Activated B cell treated with CpG ODN at 0.5 μM for 24 hours (primary cell): ENCODE measurements at regions of chr5 and their contacts with region 1.

Region 1: GRCh38 chr5:59188419-59189225 is 605.7 kb downstream of the RAB3C start:
- DNase-seq: peak; percentile 21
- ATAC-seq: peak; percentile 54
- H3K4me3 Mint-ChIP-seq: peak overlapping the region; percentile 48
- H3K27ac Mint-ChIP-seq: no peak overlapping the region
- H3K4me1 Mint-ChIP-seq: peaks cover 6% of the 10 kb centered on the region
- H3K27me3 Mint-ChIP-seq: peaks cover 3% of the 10 kb centered on the region
- CTCF ChIP-seq: peak; percentile 94

Region 2: GRCh38 chr5:58944221-58944620 is 244.4 kb before region 1 on chr5:
- CTCF ChIA-PET with region 1: no interaction called
- POLR2A ChIA-PET with region 1: no interaction called
- intact Hi-C with region 1: no loop called
- DNase-seq: no peak
- ATAC-seq: no peak
- H3K4me3 Mint-ChIP-seq: no peak overlapping the region
- H3K27ac Mint-ChIP-seq: no peak overlapping the region
- H3K4me1 Mint-ChIP-seq: no peaks in the 10 kb centered on the region
- H3K27me3 Mint-ChIP-seq: peaks cover 5% of the 10 kb centered on the region
- CTCF ChIP-seq: no peak

Region 3: DNA sequence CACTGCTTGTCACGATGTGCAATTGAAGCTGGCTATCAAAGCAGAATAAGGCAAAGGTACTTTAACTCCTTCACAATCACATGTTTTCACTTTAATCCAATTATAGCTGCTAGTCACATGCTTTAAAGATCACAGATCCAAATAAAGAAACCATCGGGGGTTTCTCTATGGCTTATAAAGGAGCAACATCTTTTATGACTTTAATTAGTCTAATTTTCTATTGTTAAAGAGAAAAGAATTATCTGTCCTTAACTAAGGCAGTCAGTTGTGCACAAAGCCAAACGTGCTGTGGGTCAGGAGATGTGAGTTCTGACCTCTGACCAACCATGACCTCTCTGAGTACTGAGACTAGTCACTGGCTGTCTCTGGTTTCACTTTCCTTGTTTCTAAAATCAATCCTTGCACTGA is 44.7 kb before region 1 on chr5:
- CTCF ChIA-PET with region 1: no interaction called
- POLR2A ChIA-PET with region 1: no interaction called
- intact Hi-C with region 1: no loop called
- DNase-seq: no peak
- ATAC-seq: no peak
- H3K4me3 Mint-ChIP-seq: no peak overlapping the region
- H3K27ac Mint-ChIP-seq: no peak overlapping the region
- H3K4me1 Mint-ChIP-seq: peaks cover 7% of the 10 kb centered on the region
- H3K27me3 Mint-ChIP-seq: no peaks in the 10 kb centered on the region
- CTCF ChIP-seq: no peak

Region 4: GRCh38 chr5:59367791-59368394 is 179.3 kb after region 1 on chr5:
- CTCF ChIA-PET with region 1: interaction called, 31 read pairs
- POLR2A ChIA-PET with region 1: no interaction called
- intact Hi-C with region 1: loop called (anchors 1 kb)
- DNase-seq: no peak
- ATAC-seq: no peak
- H3K4me3 Mint-ChIP-seq: no peak overlapping the region
- H3K27ac Mint-ChIP-seq: no peak overlapping the region
- H3K4me1 Mint-ChIP-seq: no peaks in the 10 kb centered on the region
- H3K27me3 Mint-ChIP-seq: peaks cover 2% of the 10 kb centered on the region
- CTCF ChIP-seq: no peak

Region 5: DNA sequence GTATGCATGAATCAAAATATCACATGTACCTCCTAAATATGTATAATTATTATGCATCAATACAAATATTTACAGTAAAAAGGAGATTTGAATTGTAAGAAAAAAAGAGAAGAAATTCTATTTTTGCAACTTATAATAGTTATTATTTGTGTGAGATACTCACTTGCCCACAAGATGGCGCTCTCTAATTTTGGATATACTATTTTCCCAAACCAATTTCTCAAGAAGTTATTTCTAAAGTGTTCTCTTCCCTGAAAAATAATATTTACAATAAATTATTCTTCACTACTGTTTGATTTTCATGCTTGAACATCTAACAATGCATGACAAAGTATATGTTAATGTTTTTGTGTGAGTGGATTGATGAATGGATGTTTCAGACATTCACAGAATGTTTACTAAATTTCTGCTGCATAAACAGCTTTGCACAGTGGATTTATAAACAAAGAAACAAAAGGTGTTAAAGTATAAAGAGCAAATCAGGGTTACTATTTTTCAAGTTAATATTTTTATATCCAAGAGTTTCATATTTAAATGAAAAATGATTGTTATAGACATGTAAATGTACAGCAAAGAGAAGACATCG is 201.5 kb after region 1 on chr5:
- CTCF ChIA-PET with region 1: interaction called, 13 read pairs
- POLR2A ChIA-PET with region 1: no interaction called
- intact Hi-C with region 1: no loop called
- DNase-seq: no peak
- ATAC-seq: no peak
- H3K4me3 Mint-ChIP-seq: no peak overlapping the region
- H3K27ac Mint-ChIP-seq: no peak overlapping the region
- H3K4me1 Mint-ChIP-seq: peaks cover 14% of the 10 kb centered on the region
- H3K27me3 Mint-ChIP-seq: no peaks in the 10 kb centered on the region
- CTCF ChIP-seq: peak; percentile 75

Region 6: GRCh38 chr5:59673438-59674058 is 484.9 kb after region 1 on chr5:
- CTCF ChIA-PET with region 1: interaction called, 5 read pairs
- POLR2A ChIA-PET with region 1: no interaction called
- intact Hi-C with region 1: loop called (anchors 1 kb)
- DNase-seq: no peak
- ATAC-seq: peak; percentile 28
- H3K4me3 Mint-ChIP-seq: no peak overlapping the region
- H3K27ac Mint-ChIP-seq: no peak overlapping the region
- H3K4me1 Mint-ChIP-seq: peaks cover 10% of the 10 kb centered on the region
- H3K27me3 Mint-ChIP-seq: no peaks in the 10 kb centered on the region
- CTCF ChIP-seq: peak; percentile 75

Region 7: DNA sequence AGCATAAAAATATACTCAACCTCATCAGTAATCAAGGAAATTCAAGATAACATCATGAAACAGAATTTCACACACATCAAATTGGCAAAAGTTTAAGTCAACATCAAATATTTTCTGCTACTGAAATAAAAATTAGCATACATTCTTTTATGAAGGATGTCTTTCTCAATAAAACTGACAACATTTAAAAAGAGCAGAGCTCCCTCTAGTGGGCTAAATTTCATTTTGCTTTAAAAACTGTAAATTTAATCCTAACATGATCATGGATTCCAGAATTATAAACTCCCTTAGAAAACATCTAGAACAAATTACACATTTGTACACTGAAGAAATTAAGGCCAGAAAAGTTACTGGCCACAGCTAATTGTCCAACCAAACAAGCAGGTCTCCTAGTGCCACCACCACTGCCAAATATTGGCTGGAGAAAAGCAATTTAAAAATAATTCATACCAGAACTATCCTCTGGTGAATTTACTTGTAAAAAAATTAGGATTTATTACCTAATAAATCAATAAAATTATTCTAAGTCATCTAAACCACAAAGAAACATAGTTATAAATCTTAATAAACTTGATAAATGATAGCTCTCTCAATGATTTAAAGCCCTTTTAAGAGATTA is 1480.2 kb after region 1 on chr5:
- CTCF ChIA-PET with region 1: no interaction called
- POLR2A ChIA-PET with region 1: no interaction called
- intact Hi-C with region 1: loop called (anchors 10 kb)
- DNase-seq: no peak
- ATAC-seq: no peak
- H3K4me3 Mint-ChIP-seq: no peak overlapping the region
- H3K27ac Mint-ChIP-seq: no peak overlapping the region
- H3K4me1 Mint-ChIP-seq: no peaks in the 10 kb centered on the region
- H3K27me3 Mint-ChIP-seq: no peaks in the 10 kb centered on the region
- CTCF ChIP-seq: peak; percentile 25